Activated naive CD4-positive, alpha-beta T cell treated with anti-CD3 and anti-CD28 coated beads for 36 hours (primary cell): ENCODE measurements at regions of chr17 and their contacts with region 1.

Region 1: GRCh38 chr17:29931231-29931932 is 1.4 kb upstream of the SSH2 start:
- DNase-seq: peak; percentile 78
- H3K4me3 Mint-ChIP-seq: no peak overlapping the region
- H3K27ac Mint-ChIP-seq: no peak overlapping the region
- H3K4me1 Mint-ChIP-seq: peaks cover 16% of the 10 kb centered on the region
- H3K27me3 Mint-ChIP-seq: no peaks in the 10 kb centered on the region

Region 2: DNA sequence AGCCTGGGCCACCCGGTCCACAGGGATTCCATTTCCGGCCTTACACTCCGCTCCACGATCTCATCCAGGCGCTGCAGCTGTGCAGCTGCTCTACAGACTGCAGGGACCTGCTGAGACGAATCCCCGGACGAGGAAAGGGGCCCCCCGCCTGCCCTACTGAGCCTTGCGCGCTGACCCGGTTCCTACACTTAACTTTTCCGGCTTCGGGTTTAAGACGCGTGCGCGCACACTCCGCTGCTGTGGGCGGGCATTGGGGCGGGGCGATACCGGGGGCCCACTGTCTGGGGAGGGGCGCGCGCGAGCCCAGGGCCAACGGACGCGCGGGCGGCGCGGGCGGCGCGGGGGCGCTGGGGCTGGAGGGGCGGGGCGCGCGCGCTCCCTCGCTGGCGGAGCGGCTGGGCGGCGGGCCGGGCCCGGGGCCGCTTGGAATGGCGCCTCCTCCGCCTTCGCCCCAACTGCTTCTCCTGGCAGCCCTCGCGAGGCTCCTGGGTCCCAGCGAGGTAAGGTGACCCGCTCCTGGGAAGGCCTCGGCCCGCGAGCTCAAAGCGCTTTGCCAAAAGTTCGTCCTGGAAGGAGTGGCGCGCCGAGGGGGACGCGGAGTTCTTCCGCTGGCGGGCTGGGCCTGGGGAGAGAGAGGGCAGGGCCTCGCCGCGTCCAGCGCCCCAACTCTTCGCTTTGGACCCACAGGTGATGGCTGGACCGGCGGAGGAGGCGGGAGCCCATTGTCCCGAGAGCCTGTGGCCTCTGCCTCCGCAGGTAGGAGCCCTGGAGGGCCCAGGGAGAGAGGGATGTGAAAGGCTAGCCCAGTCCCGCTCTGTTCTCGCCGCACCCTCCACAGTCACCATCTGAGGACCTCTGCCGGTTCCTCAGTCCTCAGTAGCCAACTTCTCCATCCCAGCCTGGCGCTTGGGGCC is 362.8 kb before region 1 on chr17 and contains the start of gene TP53I13:
- CTCF ChIA-PET with region 1: interaction called, 3 read pairs
- intact Hi-C with region 1: loop called (anchors 5 kb)
- DNase-seq: peak; percentile 91
- H3K4me3 Mint-ChIP-seq: peak within 1 kb of the TSS; percentile 94
- H3K27ac Mint-ChIP-seq: peak within 1 kb of the TSS; percentile 88
- H3K4me1 Mint-ChIP-seq: peaks cover 12% of the 10 kb centered on the region
- H3K27me3 Mint-ChIP-seq: no peaks in the 10 kb centered on the region
- total RNA-seq, gene TP53I13: 30.9 to 37.2 TPM

Region 3: GRCh38 chr17:29640413-29640812 is 291.0 kb before region 1 on chr17:
- CTCF ChIA-PET with region 1: interaction called, 25 read pairs
- intact Hi-C with region 1: loop called (anchors 1 kb)
- DNase-seq: no peak
- H3K4me3 Mint-ChIP-seq: no peak overlapping the region
- H3K27ac Mint-ChIP-seq: peak overlapping the region; percentile 82
- H3K4me1 Mint-ChIP-seq: peaks cover 38% of the 10 kb centered on the region
- H3K27me3 Mint-ChIP-seq: no peaks in the 10 kb centered on the region

Region 4: GRCh38 chr17:29802246-29802645 is 129.1 kb before region 1 on chr17:
- CTCF ChIA-PET with region 1: interaction called, 213 read pairs
- intact Hi-C with region 1: loop called (anchors 1 kb)
- DNase-seq: no peak
- H3K4me3 Mint-ChIP-seq: no peak overlapping the region
- H3K27ac Mint-ChIP-seq: no peak overlapping the region
- H3K4me1 Mint-ChIP-seq: no peaks in the 10 kb centered on the region
- H3K27me3 Mint-ChIP-seq: no peaks in the 10 kb centered on the region

Region 5: GRCh38 chr17:29828676-29829284 is 102.6 kb before region 1 on chr17:
- CTCF ChIA-PET with region 1: interaction called, 15 read pairs
- intact Hi-C with region 1: no loop called
- DNase-seq: no peak
- H3K4me3 Mint-ChIP-seq: no peak overlapping the region
- H3K27ac Mint-ChIP-seq: no peak overlapping the region
- H3K4me1 Mint-ChIP-seq: peaks cover 36% of the 10 kb centered on the region
- H3K27me3 Mint-ChIP-seq: no peaks in the 10 kb centered on the region

Region 6: DNA sequence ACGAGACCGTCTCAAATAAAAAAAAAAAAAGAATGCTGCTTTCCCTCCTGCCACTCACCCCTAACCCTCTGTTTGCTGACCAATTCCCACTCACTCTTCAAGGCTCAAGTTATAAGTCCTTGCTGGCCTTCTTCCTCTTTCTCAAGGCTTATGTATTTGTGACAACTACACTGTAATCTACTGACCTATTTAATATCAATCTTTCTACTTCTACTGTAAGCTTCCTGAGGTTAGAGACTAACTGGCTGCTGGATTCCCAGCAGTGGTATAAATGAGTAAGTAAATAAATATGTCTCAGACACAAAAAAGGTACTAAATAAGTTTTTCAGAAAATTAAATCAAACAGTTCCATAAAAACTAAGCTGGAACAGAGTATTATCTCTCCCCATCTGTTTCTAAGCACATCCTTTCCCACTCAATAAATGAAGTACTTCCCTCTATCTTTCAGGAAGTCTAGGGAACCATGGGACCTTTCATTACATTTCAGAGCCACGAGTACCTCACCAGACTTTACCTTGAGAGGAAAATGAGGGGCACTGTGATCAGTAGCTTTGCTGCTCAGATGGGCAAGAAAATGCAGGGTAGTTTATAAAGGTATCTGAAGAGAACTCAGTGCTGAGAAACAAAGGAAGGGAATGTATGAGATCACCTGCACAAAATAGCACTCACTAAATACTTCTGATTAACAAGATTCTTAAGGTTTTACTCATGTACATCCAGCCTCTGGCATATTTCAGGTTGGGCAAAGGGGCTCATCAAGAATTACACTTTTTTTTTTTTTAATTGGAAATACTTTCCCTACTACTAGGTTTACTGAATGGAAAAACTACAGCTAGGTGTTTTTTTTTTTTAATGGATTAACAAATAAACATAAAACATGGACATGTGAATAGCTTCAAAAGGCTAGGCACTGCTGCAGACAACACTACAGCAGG is 12.2 kb before region 1 on chr17:
- CTCF ChIA-PET with region 1: interaction called, 11 read pairs
- intact Hi-C with region 1: no loop called
- DNase-seq: no peak
- H3K4me3 Mint-ChIP-seq: no peak overlapping the region
- H3K27ac Mint-ChIP-seq: no peak overlapping the region
- H3K4me1 Mint-ChIP-seq: peaks cover 39% of the 10 kb centered on the region
- H3K27me3 Mint-ChIP-seq: no peaks in the 10 kb centered on the region

Region 7: DNA sequence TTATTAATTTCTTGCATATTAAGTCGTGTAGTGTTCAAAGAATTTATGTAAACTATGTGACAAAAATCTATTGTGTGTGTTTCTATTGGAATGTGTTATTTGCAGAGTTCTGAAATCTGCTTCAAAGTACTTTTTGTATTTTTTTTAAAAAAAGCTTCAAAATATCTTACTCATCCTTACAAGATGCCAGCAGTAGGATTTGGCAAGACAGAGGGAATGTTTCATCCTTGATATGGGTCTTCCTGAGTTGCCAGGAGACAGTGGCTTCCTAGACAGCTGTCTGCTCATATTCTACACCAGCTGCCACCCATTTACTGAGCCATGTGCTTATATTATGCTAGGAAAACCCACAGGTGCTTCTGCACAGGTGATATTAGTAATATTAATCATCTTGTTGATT is 46.5 kb after region 1 on chr17:
- CTCF ChIA-PET with region 1: no interaction called
- intact Hi-C with region 1: no loop called
- DNase-seq: no peak
- H3K4me3 Mint-ChIP-seq: no peak overlapping the region
- H3K27ac Mint-ChIP-seq: no peak overlapping the region
- H3K4me1 Mint-ChIP-seq: no peaks in the 10 kb centered on the region
- H3K27me3 Mint-ChIP-seq: no peaks in the 10 kb centered on the region

Region 8: GRCh38 chr17:30000001-30000754 is 68.8 kb after region 1 on chr17:
- CTCF ChIA-PET with region 1: interaction called, 3 read pairs
- intact Hi-C with region 1: loop called (anchors 1 kb)
- DNase-seq: no peak
- H3K4me3 Mint-ChIP-seq: no peak overlapping the region
- H3K27ac Mint-ChIP-seq: no peak overlapping the region
- H3K4me1 Mint-ChIP-seq: peaks cover 13% of the 10 kb centered on the region
- H3K27me3 Mint-ChIP-seq: no peaks in the 10 kb centered on the region

Region 9: DNA sequence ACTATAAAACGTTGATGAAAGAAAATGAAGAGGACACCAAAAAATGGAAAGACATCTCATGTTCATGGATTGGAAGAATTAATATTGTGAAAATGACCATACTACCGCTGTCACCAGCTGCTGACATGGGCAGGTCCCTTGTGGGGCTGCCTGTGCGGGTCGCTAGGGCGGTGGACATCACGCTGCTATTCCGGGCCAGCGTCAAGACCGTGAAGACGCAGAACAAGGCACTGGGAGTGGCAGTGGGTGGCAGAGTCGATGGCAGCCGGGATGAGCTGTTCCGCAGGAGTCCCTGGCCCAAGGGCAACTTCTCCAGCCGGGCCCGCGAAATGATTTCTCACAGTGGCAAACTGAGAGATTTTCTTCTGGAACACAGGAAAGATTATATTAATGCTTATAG is 137.1 kb after region 1 on chr17:
- CTCF ChIA-PET with region 1: no interaction called
- intact Hi-C with region 1: no loop called
- DNase-seq: no peak
- H3K4me3 Mint-ChIP-seq: no peak overlapping the region
- H3K27ac Mint-ChIP-seq: no peak overlapping the region
- H3K4me1 Mint-ChIP-seq: no peaks in the 10 kb centered on the region
- H3K27me3 Mint-ChIP-seq: peaks cover 3% of the 10 kb centered on the region